Activated CD4-positive, alpha-beta T cell treated with anti-CD3 and anti-CD28 coated beads for 36 hours (primary cell): ENCODE measurements at regions of chr5 and their contacts with region 1.

Region 1: DNA sequence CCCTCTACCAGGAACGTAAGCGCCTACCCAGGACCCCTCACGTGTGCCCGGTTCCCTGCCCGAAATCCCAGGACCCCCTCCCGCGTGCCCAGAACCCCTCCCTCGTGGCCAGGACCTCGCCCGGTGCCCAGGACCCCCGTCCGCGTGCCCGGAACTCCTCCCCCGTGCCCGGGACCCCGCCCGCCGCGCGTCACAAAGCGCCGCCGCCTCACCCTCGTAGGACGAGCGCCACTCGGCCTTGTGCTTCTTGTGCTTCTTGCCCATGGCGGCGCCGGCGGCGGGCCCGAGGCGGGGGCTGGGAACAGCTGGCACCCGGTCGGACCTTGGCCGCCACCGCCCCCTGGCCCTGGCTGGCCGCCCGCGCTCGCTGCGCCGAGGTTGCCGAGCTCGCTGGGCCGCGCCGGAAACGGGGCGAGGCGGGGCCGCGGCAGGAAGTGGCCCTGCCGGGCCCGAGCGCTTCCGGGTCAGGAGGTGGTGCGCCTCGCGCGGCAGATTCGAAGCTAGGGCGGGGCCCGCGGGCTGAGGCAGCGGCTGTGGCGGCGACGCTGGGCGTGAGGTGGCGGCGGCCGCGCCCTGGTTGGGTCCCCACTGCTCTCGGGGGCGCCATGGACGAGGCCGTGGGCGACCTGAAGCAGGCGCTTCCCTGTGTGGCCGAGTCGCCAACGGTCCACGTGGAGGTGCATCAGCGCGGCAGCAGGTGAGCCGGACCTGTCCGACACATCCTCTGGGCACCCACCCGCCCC is at the starts of genes BRD9 and TRIP13:
- DNase-seq: peak; percentile 93
- ATAC-seq: peak; percentile 98
- H3K4me3 Mint-ChIP-seq: peak within 1 kb of the TSS; percentile 90
- H3K27ac Mint-ChIP-seq: peak within 1 kb of the TSS; percentile 85
- H3K4me1 Mint-ChIP-seq: peaks cover 36% of the 10 kb centered on the region
- H3K27me3 Mint-ChIP-seq: no peaks in the 10 kb centered on the region
- total RNA-seq, gene BRD9: 46.7 to 49.7 TPM
- total RNA-seq, gene TRIP13: 34.4 to 34.7 TPM

Region 2: DNA sequence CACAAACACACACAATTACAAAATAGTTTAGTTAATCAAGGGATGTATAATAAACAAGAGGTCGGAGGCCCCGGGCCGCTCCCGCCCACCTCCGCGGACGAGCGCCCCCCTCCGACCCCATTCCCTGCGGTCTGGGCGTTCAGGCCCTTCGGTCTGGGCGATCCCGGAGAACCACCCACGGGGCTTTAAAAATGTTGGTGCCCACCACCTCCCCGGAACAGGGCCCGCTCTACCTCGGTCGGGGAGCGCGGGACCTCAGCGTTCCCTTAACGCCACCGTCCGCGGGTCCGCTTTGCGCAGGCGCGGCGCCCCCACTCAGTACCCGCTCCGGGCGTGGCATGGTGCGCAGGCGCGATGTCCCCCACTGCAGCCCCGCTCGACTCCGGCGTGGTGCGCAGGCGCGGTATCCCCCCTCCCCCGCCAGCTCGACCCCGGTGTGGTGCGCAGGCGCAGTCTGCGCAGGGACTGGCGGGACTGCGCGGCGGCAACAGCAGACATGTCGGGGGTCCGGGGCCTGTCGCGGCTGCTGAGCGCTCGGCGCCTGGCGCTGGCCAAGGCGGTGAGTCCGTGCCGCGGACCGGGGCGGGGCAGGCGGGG is 674.6 kb before region 1 on chr5 and contains the starts of genes CCDC127 and SDHA:
- CTCF ChIA-PET with region 1: no interaction called
- POLR2A ChIA-PET with region 1: no interaction called
- intact Hi-C with region 1: loop called in 1 of 2 experiments (anchors 5 kb)
- DNase-seq: peak; percentile 99
- ATAC-seq: peak; percentile 84
- H3K4me3 Mint-ChIP-seq: peak within 1 kb of the TSS; percentile 94
- H3K27ac Mint-ChIP-seq: peak within 1 kb of the TSS; percentile 89
- H3K4me1 Mint-ChIP-seq: peaks cover 60% of the 10 kb centered on the region
- H3K27me3 Mint-ChIP-seq: no peaks in the 10 kb centered on the region
- total RNA-seq, gene CCDC127: 6.0 to 7.0 TPM
- total RNA-seq, gene SDHA: 104 to 121 TPM

Region 3: DNA sequence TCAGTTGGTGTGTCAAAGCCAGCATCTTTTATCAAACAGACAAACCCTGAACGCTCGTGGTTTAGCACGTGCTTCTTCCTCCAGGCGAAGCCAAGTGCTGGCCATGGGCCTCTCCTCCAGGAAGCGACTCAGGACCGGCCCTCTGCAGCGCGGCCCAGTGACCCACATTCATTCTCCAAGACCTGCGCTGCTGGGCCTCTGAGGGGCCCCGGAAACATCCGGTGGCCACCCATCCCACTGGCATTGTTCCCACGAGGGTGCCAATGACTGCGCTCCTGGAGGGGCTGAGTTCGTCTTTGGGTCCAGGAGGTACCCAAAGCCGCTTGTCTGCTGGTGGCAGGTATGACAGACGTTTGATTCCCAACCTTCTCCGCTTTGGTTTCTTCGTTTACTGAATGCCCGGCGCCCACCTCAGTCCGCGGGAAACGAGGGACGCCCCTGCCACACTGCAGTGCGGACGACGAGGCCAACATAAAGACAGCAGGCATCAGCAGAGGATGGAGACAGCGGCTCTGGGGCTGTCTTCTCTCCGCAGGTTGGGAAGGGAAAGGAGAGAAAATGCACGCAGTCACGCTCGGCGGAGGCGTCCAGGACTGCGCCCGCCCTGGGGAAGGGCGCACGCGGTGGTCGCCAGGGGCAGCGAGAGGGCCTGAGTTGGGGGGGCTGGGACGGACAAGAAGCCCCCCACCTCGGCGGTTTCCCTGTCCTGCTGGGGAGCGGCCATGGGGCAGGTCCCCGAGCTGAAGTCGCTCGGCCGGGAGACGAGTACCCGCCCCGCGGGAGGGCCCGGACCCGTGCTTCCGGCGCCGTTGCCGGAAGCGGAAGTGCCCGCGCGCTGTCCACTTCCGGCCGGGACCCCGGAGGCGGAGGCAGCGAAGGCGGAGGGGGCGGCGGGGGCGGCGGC is 450.0 kb before region 1 on chr5 and contains the start of gene EXOC3:
- CTCF ChIA-PET with region 1: no interaction called
- POLR2A ChIA-PET with region 1: no interaction called
- intact Hi-C with region 1: loop called in 1 of 2 experiments (anchors 10 kb)
- DNase-seq: peak; percentile 83
- ATAC-seq: peak; percentile 88
- H3K4me3 Mint-ChIP-seq: peak within 1 kb of the TSS; percentile 87
- H3K27ac Mint-ChIP-seq: peak within 1 kb of the TSS; percentile 92
- H3K4me1 Mint-ChIP-seq: peaks cover 37% of the 10 kb centered on the region
- H3K27me3 Mint-ChIP-seq: no peaks in the 10 kb centered on the region
- total RNA-seq, gene EXOC3: 49.7 to 62.7 TPM

Region 4: GRCh38 chr5:611721-612486 is 280.7 kb before region 1 on chr5 and contains the start of gene CEP72:
- CTCF ChIA-PET with region 1: no interaction called
- POLR2A ChIA-PET with region 1: no interaction called
- intact Hi-C with region 1: loop called in 1 of 2 experiments (anchors 1 kb)
- DNase-seq: peak; percentile 97
- ATAC-seq: peak; percentile 97
- H3K4me3 Mint-ChIP-seq: peak within 1 kb of the TSS; percentile 79
- H3K27ac Mint-ChIP-seq: peak within 1 kb of the TSS; percentile 79
- H3K4me1 Mint-ChIP-seq: peaks cover 53% of the 10 kb centered on the region
- H3K27me3 Mint-ChIP-seq: peaks cover 5% of the 10 kb centered on the region
- total RNA-seq, gene CEP72: 23.7 to 26.4 TPM

Region 5: DNA sequence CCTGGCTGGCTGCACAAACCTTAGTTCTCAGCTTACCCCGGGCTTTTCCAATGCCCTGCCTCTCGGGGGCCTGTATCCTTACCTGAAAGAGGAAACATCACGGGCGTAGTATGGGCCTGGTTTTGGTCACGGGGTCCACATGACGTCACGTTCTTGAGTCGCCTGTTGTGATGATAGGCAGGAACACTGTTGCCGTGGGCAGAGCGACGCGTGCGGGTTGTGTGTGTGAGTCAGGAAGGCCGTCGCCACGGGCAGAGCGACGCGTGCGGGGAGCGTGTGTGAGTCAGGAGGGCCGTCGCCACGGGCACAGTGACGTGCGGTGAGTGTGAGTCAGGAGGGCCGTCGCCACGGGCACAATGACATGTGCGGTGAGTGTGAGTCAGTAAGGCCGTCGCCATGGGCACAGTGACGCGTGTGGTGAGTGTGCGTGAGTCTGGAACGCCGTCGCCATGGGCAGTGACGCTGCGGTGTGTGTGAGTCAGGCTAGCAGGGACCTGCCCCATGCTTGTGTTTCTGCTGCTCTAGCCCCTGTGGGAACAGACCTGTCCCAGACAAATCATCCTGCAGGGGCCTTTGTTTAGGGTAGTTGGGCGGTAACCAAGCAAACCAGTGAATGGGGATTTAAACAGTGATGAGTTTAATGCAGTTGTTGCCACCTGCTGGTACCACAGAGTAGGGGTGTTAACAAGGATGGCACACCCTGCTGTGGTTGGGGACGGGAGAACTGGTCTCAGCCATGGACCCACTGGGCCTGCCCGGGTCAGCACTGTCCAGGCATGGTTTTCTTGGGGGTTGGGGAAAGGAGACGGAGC is 19.9 kb after region 1 on chr5:
- CTCF ChIA-PET with region 1: interaction called, 3 read pairs
- POLR2A ChIA-PET with region 1: no interaction called
- intact Hi-C with region 1: loop called in 1 of 2 experiments (anchors 1 kb)
- DNase-seq: peak; percentile 88
- ATAC-seq: peak; percentile 95
- H3K4me3 Mint-ChIP-seq: no peak overlapping the region
- H3K27ac Mint-ChIP-seq: peak overlapping the region; percentile 71
- H3K4me1 Mint-ChIP-seq: peaks cover 13% of the 10 kb centered on the region
- H3K27me3 Mint-ChIP-seq: no peaks in the 10 kb centered on the region

Region 6: DNA sequence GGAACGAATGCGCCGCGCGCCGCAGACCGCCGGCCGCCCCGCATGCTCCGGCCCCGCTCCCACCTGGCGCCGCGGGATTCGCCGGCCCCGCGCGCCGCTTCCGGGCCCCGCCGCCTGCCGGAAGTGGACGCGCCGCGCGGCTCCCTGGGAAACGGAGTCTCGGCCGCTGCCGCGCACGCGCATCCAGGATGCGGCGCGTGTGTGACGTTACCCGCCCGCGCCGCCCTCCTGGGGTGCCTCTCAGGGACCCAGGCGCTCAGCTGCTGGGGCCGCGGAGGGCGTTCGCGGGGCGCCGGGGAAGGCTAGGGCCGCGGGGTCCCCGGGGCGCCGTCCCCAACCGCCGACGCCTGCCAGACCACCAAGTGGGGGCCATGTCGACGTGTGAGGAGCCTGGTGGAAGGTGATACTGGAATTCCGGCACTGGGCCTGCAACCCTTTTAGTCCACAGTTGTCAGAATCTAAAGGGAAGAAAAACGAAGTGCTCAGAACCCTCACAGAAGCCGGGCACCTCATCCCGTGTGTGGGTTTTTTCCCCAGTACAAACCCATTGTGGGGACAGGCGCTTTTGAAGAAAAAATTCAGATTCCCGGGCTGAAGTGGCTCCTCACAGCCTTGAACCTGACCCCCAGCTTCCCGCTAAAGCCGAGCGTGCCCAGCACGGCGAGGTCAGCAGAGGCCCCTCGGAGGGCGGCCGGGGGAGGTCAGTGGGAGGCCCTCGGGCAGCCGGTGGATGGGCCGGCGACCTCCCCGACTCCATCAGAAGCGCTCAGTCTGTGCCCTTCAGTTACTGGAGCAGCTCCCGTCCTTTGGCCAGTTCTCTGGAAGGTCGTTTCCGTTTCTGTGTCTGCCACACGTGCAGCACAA is 452.6 kb after region 1 on chr5 and contains the start of gene CLPTM1L:
- CTCF ChIA-PET with region 1: no interaction called
- POLR2A ChIA-PET with region 1: no interaction called
- intact Hi-C with region 1: loop called in 1 of 2 experiments (anchors 1 kb)
- DNase-seq: peak; percentile 93
- ATAC-seq: peak; percentile 96
- H3K4me3 Mint-ChIP-seq: peak within 1 kb of the TSS; percentile 94
- H3K27ac Mint-ChIP-seq: peak within 1 kb of the TSS; percentile 92
- H3K4me1 Mint-ChIP-seq: peaks cover 22% of the 10 kb centered on the region
- H3K27me3 Mint-ChIP-seq: no peaks in the 10 kb centered on the region
- total RNA-seq, gene CLPTM1L: 62.1 to 62.2 TPM

Region 7: DNA sequence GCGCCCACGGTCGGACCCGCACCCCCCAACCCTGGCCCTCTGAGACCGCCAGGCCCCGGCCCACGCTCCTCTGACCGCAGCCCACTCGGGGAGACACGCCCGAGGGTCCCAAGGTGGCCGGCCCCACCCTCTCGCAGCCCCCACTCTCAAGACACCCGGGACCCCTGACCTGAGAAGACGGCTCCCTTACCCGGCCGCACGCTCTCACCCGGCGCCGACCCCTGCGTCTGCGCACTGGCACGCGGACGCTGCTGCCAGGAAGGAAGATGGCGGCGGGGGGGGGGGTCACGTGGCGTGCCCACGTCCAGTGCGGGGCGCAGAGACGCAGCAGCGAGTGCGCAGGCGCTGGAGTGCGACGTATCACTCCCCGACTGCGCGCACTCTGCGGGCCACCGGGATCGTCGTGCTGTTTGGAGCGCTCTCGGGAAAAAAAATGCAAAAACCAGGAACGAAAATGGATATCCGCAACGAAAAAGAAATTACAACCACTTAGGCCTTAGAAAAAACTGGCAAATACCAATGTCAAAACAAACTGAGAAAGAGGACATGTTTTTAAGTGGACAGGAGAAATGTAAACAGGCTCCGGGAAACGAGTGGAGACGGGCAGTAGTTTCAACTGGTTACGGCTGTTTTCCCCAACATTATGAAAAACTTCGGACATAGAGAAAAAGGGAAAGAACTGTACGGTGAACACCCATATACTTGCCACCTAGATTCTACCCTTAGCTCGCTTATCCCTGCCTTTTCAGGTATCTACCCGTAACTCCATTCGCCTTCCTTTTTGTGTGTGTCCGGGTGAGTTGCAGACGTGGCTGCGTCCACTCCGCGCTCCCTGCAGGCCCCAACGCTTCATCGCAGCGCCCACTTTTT is 907.3 kb after region 1 on chr5 and contains the start of gene MRPL36:
- CTCF ChIA-PET with region 1: no interaction called
- POLR2A ChIA-PET with region 1: no interaction called
- intact Hi-C with region 1: loop called in 1 of 2 experiments (anchors 2 kb)
- DNase-seq: peak; percentile 97
- ATAC-seq: peak; percentile 79
- H3K4me3 Mint-ChIP-seq: peak within 1 kb of the TSS; percentile 94
- H3K27ac Mint-ChIP-seq: peak within 1 kb of the TSS; percentile 97
- H3K4me1 Mint-ChIP-seq: peaks cover 54% of the 10 kb centered on the region
- H3K27me3 Mint-ChIP-seq: no peaks in the 10 kb centered on the region
- total RNA-seq, gene MRPL36: 51.4 to 64.9 TPM